Activated T-helper 2 cell treated with anti-CD3 and anti-CD28 coated beads, Interferon-gamma antibody, Interleukin-2, Interleukin-4, amounts not matched to agents 10 μg/mL and 5 μg/mL and 100 μg/mL, durations not matched to agents 14 hours and 24 hours and 36 hours (primary cell): ENCODE measurements at regions of chr7 and their contacts with region 1.

Region 1: GRCh38 chr7:108181073-108181985 is 51.2 kb upstream of the LAMB4 start:
- DNase-seq: no peak
- H3K4me3 Mint-ChIP-seq: no peak overlapping the region
- H3K27ac Mint-ChIP-seq: no peak overlapping the region
- H3K4me1 Mint-ChIP-seq: no peaks in the 10 kb centered on the region
- H3K27me3 Mint-ChIP-seq: peaks cover 5% of the 10 kb centered on the region

Region 2: GRCh38 chr7:107614425-107614824 is 566.9 kb before region 1 on chr7:
- intact Hi-C with region 1: no loop called
- DNase-seq: no peak
- H3K4me3 Mint-ChIP-seq: no peak overlapping the region
- H3K27ac Mint-ChIP-seq: no peak overlapping the region
- H3K4me1 Mint-ChIP-seq: peaks cover 18% of the 10 kb centered on the region
- H3K27me3 Mint-ChIP-seq: no peaks in the 10 kb centered on the region

Region 3: GRCh38 chr7:108135446-108136190 is 45.7 kb before region 1 on chr7:
- intact Hi-C with region 1: no loop called
- DNase-seq: peak; percentile 27
- H3K4me3 Mint-ChIP-seq: peak overlapping the region; percentile 55
- H3K27ac Mint-ChIP-seq: peak overlapping the region; percentile 93
- H3K4me1 Mint-ChIP-seq: peaks cover 38% of the 10 kb centered on the region
- H3K27me3 Mint-ChIP-seq: peaks cover 30% of the 10 kb centered on the region

Region 4: DNA sequence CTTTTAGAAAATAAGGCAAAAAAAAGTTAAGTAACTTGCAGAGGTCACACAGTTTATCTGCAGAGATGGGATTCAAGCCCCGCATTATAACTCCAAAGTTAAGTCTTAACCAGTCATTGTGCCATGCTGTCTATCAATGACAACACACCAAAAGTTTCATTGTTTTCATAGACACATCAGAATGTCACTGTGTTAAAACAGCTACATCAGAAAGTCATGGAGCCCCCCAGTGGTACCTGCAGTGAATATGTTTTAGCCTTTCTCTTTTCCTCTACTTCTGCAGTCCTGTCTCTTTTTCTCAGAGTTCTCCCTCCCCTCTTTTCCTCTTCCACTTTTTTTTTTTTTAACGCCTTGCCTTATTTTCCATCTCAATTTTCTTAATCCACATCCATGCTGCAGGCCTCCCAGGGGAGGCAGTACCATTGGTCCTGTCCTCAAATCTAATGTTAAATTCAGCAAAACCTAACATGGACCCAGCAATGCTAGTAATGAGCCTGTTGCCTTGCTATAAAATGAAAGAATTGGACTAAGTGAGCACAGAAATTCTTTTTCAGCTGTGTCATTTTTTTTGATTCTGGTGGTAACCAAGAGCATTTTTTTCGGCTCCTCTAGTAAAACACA is 278.7 kb after region 1 on chr7:
- intact Hi-C with region 1: loop called (anchors 2 kb)
- DNase-seq: no peak
- H3K4me3 Mint-ChIP-seq: no peak overlapping the region
- H3K27ac Mint-ChIP-seq: no peak overlapping the region
- H3K4me1 Mint-ChIP-seq: peaks cover 13% of the 10 kb centered on the region
- H3K27me3 Mint-ChIP-seq: peaks cover 47% of the 10 kb centered on the region